ENCODE measurements at regions of chr2 and their contacts with region 1.

Region 1: GRCh38 chr2:106085181-106085940 is 108.7 kb downstream of the UXS1 start:
- DNase-seq: peak; percentile 78
- H3K4me3 Mint-ChIP-seq: peak overlapping the region; percentile 68
- H3K27ac Mint-ChIP-seq: peak overlapping the region; percentile 89
- H3K4me1 Mint-ChIP-seq: peaks cover 64% of the 10 kb centered on the region
- H3K27me3 Mint-ChIP-seq: no peaks in the 10 kb centered on the region

Region 2: GRCh38 chr2:105369747-105370690 is 715.3 kb before region 1 on chr2:
- CTCF ChIA-PET with region 1: no interaction called
- POLR2A ChIA-PET with region 1: no interaction called
- intact Hi-C with region 1: loop called (anchors 10 kb)
- DNase-seq: peak; percentile 93
- H3K4me3 Mint-ChIP-seq: no peak overlapping the region
- H3K27ac Mint-ChIP-seq: no peak overlapping the region
- H3K4me1 Mint-ChIP-seq: peaks cover 20% of the 10 kb centered on the region
- H3K27me3 Mint-ChIP-seq: no peaks in the 10 kb centered on the region

Region 3: DNA sequence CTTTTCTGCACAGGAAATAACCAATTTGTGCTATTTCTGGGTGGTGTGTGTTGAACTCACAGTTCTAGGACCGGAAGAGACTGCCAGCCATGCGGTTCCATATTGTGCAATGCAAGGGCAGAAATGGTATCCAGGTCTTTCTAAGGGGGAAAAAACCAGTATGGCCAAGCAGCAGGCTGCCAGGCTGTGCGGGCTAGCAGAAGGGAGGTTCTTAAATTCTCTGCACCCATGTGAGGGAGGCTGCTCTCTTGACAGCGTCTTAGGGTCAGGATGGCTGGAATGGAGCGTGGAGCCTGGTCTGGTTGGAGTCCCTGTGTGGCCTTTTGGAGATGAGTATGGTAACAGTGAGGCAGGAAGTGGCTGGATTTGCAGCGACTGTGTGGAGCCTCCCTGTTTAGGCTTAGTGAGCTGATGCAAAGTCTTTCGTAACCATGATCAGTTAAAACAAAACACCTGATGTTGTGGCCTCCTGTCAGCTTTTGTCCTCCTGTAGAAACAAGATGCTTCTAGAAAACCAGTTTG is 288.0 kb before region 1 on chr2:
- CTCF ChIA-PET with region 1: no interaction called
- POLR2A ChIA-PET with region 1: interaction called, 3 read pairs
- intact Hi-C with region 1: loop called (anchors 2 kb)
- DNase-seq: peak; percentile 68
- H3K4me3 Mint-ChIP-seq: peak overlapping the region; percentile 52
- H3K27ac Mint-ChIP-seq: peak overlapping the region; percentile 92
- H3K4me1 Mint-ChIP-seq: peaks cover 94% of the 10 kb centered on the region
- H3K27me3 Mint-ChIP-seq: no peaks in the 10 kb centered on the region

Region 4: GRCh38 chr2:105858868-105859693 is 226.3 kb before region 1 on chr2:
- CTCF ChIA-PET with region 1: no interaction called
- POLR2A ChIA-PET with region 1: no interaction called
- intact Hi-C with region 1: loop called (anchors 1 kb)
- DNase-seq: peak; percentile 53
- H3K4me3 Mint-ChIP-seq: peak overlapping the region; percentile 17
- H3K27ac Mint-ChIP-seq: peak overlapping the region; percentile 96
- H3K4me1 Mint-ChIP-seq: peaks cover 93% of the 10 kb centered on the region
- H3K27me3 Mint-ChIP-seq: no peaks in the 10 kb centered on the region

Region 5: DNA sequence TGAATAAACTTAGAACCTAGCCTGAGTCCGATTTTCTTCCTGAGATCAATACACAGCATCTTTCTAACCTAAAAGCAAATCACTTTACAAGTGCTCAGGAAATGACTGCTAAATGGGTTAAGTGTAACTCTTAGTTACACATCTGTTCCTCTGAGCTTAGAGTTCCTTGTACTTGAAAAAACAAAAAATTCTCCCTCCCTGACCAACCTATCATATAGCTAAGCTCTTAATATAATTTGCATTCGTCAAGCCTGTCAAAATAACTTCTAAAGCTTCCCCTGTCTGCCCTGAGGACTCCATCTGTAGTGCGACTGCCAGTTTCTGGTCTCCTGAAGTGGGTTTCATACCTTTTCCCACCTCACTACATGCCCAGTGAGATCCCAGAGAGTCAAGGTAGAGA is 150.3 kb before region 1 on chr2:
- CTCF ChIA-PET with region 1: no interaction called
- POLR2A ChIA-PET with region 1: no interaction called
- intact Hi-C with region 1: loop called (anchors 1 kb)
- DNase-seq: no peak
- H3K4me3 Mint-ChIP-seq: no peak overlapping the region
- H3K27ac Mint-ChIP-seq: no peak overlapping the region
- H3K4me1 Mint-ChIP-seq: peaks cover 8% of the 10 kb centered on the region
- H3K27me3 Mint-ChIP-seq: no peaks in the 10 kb centered on the region

Region 6: GRCh38 chr2:106098081-106098480 is 12.7 kb after region 1 on chr2:
- CTCF ChIA-PET with region 1: interaction called, 17 read pairs
- POLR2A ChIA-PET with region 1: interaction called, 3 read pairs
- intact Hi-C with region 1: loop called (anchors 1 kb)
- DNase-seq: peak; percentile 50
- H3K4me3 Mint-ChIP-seq: no peak overlapping the region
- H3K27ac Mint-ChIP-seq: no peak overlapping the region
- H3K4me1 Mint-ChIP-seq: peaks cover 36% of the 10 kb centered on the region
- H3K27me3 Mint-ChIP-seq: no peaks in the 10 kb centered on the region

Region 7: GRCh38 chr2:106124905-106125405 is 39.6 kb after region 1 on chr2:
- CTCF ChIA-PET with region 1: no interaction called
- POLR2A ChIA-PET with region 1: no interaction called
- intact Hi-C with region 1: no loop called
- DNase-seq: no peak
- H3K4me3 Mint-ChIP-seq: no peak overlapping the region
- H3K27ac Mint-ChIP-seq: no peak overlapping the region
- H3K4me1 Mint-ChIP-seq: peaks cover 31% of the 10 kb centered on the region
- H3K27me3 Mint-ChIP-seq: no peaks in the 10 kb centered on the region

Region 8: DNA sequence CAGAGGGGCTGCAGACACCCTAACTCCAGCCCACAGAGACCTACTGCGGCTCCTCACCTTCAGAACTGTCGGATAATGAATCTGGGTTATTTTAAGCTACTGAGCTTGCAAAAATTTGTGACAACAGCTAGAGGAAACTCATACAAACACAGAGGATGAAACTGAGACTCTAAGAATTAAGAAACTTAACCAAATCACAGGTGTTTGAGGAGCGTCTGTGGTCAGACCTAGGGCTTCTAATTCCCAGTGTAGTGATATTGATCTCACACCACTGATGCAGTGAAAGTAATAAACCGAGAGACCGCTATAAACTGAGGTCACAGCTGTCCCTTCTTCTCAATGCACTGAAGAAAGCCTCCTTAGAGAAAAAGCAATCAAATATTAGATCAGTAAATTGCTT is 272.7 kb after region 1 on chr2:
- CTCF ChIA-PET with region 1: no interaction called
- POLR2A ChIA-PET with region 1: no interaction called
- intact Hi-C with region 1: no loop called
- DNase-seq: no peak
- H3K4me3 Mint-ChIP-seq: no peak overlapping the region
- H3K27ac Mint-ChIP-seq: no peak overlapping the region
- H3K4me1 Mint-ChIP-seq: no peaks in the 10 kb centered on the region
- H3K27me3 Mint-ChIP-seq: peaks cover 15% of the 10 kb centered on the region